Activated naive CD4-positive, alpha-beta T cell treated with anti-CD3 and anti-CD28 coated beads for 36 hours (primary cell): ENCODE measurements at regions of chr20 and their contacts with region 1.

Region 1: DNA sequence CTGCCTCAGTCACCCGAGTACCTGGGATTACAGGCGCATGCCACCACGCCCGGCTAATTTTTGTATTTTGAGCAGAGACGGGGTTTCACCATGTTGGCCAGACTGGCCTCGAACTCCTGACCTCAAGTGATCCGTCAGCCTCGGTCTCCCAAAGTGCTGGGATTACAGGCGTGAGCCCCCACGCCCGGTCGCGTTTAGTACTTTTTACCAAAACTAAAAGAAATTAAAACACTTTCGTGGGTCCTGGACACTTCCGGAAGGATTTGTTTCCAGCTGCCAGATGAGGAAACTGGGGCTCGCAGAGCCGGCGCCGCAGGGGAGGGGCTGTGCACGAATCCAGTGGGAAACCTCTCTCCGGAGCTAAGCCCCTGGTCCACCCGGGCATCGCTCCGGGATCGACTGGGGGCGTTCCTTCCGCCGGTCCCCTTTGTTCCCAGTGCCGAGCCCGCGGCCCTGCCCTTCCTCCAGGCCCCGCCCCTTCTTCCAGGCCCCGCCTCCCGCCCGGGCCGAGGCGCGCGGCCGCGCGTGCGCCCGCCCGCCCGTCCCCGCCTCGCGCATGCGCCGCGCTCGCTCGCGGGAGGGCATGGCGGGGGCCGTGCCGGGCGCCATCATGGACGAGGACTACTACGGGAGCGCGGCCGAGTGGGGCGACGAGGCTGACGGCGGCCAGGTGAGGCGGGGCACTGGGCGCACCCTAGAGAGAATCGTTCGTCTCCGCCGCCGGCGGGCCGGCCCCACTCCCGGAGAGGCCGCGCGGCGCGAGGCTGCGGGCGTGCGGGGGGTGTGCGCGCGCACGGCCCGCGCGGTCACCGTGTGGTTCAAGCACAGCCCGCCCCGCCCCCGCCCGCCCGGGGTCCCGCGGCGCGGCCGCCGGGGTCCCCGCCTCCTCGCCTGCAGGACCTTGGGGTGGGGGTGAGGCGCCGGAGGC is at the start of gene NELFCD:
- DNase-seq: peak; percentile 87
- H3K4me3 Mint-ChIP-seq: peak within 1 kb of the TSS; percentile 91
- H3K27ac Mint-ChIP-seq: peak within 1 kb of the TSS; percentile 79
- H3K4me1 Mint-ChIP-seq: peaks cover 33% of the 10 kb centered on the region
- H3K27me3 Mint-ChIP-seq: no peaks in the 10 kb centered on the region
- total RNA-seq, gene NELFCD: 102 to 103 TPM

Region 2: GRCh38 chr20:58888521-58889333 is 92.2 kb before region 1 on chr20:
- CTCF ChIA-PET with region 1: interaction called, 4 read pairs
- intact Hi-C with region 1: loop called (anchors 1 kb)
- DNase-seq: peak; percentile 89
- H3K4me3 Mint-ChIP-seq: peak overlapping the region; percentile 84
- H3K27ac Mint-ChIP-seq: no peak overlapping the region
- H3K4me1 Mint-ChIP-seq: peaks cover 27% of the 10 kb centered on the region
- H3K27me3 Mint-ChIP-seq: no peaks in the 10 kb centered on the region

Region 3: GRCh38 chr20:58907399-58908137 is 73.4 kb before region 1 on chr20:
- CTCF ChIA-PET with region 1: no interaction called
- intact Hi-C with region 1: loop called (anchors 5 kb)
- DNase-seq: peak; percentile 65
- H3K4me3 Mint-ChIP-seq: peak overlapping the region; percentile 66
- H3K27ac Mint-ChIP-seq: peak overlapping the region; percentile 88
- H3K4me1 Mint-ChIP-seq: peaks cover 45% of the 10 kb centered on the region
- H3K27me3 Mint-ChIP-seq: no peaks in the 10 kb centered on the region

Region 4: GRCh38 chr20:58950603-58951002 is 30.4 kb before region 1 on chr20:
- CTCF ChIA-PET with region 1: no interaction called
- intact Hi-C with region 1: no loop called
- DNase-seq: peak; percentile 8
- H3K4me3 Mint-ChIP-seq: no peak overlapping the region
- H3K27ac Mint-ChIP-seq: no peak overlapping the region
- H3K4me1 Mint-ChIP-seq: no peaks in the 10 kb centered on the region
- H3K27me3 Mint-ChIP-seq: no peaks in the 10 kb centered on the region

Region 5: DNA sequence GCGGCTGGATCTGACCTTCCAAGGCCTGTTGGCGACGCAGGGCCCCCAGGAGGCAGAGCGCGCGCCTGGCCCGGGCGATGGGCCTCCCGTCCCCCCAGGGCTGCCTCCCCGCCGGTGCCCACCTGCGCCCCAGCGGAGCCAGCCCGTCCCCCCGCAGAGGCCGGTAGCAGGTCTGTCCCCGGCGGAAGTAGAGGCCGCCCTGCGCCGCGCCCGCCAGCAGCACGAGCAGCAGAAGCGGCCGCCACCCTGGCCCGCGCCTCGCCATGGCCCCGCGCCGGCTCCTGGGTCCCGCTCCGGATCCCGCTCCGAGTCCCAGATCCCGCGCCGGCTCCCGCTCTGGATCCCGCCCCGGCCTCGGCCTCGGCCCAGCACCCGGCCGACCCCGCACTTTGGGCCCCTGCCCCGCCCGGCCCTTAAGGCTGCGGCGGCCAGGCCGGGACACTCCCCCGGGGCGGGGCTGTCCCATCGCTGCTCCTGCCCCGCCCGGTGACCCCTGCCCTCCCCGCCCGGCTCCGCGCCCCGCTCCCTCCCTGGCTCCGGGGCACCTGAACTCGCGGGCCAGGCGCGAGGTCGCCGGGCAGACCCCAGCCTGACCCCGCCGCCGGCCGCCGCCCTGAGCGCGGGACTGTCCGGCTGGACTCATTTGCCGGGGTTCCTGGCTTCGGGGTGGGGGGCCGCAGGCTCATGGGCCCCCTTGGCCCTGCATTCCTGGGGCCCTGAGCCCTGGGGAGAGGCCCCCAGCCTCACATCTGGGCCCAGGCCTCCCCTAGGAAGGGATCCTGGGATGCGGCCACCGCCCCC is 26.1 kb after region 1 on chr20 and contains the start of gene CTSZ:
- CTCF ChIA-PET with region 1: interaction called, 6 read pairs
- intact Hi-C with region 1: loop called (anchors 2 kb)
- DNase-seq: peak; percentile 43
- H3K4me3 Mint-ChIP-seq: peak within 1 kb of the TSS; percentile 73
- H3K27ac Mint-ChIP-seq: no peak within 1 kb of the TSS
- H3K4me1 Mint-ChIP-seq: peaks cover 31% of the 10 kb centered on the region
- H3K27me3 Mint-ChIP-seq: no peaks in the 10 kb centered on the region
- total RNA-seq, gene CTSZ: 17.3 to 17.9 TPM

Region 6: DNA sequence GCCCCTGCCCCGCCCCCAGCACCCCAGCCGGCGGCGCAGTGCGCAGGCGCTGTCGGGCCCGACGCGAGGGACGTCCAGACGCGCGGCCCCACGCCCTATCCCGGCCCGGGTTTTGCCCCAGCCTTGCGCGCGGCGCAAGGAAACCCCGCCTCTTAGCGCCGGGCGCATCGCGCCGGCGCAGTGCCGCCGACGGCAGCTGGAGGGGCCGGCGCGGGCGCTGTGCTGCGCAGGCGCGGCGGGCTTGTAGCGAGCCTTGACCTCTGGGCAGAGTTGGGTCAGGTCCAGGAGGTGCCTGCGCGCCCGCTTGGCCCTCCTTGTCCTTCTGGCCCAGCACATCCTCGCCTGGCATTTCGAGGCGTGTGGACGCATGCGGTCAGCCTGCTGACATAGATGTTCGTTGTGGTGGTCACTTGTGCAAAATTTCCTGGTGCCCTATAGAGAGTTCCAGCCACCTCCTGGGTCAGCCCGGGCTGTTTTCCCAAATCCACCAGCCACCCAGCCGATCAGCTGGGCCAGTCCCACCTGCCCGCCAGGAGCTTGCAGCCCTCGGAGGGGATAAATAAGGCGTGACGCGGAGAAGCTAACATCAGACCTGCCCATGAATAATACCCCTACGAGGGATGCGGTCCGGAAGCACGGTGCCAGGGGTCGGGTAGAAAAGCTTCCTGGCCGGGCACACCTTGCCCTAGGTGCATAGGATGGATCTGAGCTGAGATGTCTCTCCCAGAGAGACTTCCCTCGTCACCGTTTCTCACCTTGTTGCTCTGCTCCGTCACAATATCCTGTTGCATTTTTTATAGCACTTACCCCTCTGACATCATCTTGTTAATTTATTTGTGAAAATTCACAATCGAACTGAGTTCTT is 62.1 kb after region 1 on chr20:
- CTCF ChIA-PET with region 1: no interaction called
- intact Hi-C with region 1: loop called (anchors 1 kb)
- DNase-seq: peak; percentile 92
- H3K4me3 Mint-ChIP-seq: peak overlapping the region; percentile 93
- H3K27ac Mint-ChIP-seq: peak overlapping the region; percentile 84
- H3K4me1 Mint-ChIP-seq: peaks cover 40% of the 10 kb centered on the region
- H3K27me3 Mint-ChIP-seq: no peaks in the 10 kb centered on the region

Region 7: DNA sequence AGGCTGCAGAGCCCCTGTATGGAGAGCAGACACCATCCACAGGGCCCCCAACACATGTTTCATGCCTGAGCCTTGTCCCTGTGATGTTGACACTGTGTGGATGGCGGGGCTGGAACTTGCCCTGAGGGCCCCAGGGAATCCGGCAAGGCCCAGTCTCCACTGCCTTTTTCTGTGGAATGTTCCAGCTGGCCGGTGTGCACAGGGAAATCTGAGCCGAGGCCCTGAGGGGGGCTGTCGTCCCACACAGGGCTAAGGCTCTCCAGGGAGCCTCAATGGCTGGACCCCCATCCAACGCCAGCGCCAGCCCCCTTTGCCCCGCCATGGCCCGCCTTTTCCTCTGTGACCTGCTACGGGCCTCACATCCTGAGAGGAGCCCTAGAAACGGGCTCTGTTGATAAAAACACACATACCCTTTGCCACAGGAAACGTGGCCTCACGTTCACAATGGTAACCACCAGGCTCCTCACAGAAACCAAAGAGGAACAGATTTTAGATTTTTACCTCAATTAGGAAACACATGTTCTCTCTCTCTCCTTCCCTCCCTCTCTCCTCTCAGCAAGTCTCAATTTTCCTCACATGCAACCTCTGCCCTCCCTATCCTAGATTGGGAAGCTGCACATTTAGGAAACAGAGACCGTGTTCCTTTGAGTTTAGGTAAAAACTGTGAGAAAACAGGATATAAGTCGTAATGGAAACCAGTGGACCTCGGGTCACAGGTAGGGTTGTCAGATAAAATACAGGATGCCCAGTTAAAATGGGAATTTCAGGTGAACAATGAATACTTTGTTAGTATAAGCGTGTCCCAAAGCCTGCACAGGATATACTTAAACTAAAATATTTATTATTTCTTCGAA is 168.9 kb after region 1 on chr20:
- CTCF ChIA-PET with region 1: no interaction called
- intact Hi-C with region 1: loop called (anchors 5 kb)
- DNase-seq: peak; percentile 84
- H3K4me3 Mint-ChIP-seq: peak overlapping the region; percentile 30
- H3K27ac Mint-ChIP-seq: peak overlapping the region; percentile 82
- H3K4me1 Mint-ChIP-seq: peaks cover 88% of the 10 kb centered on the region
- H3K27me3 Mint-ChIP-seq: no peaks in the 10 kb centered on the region

Region 8: GRCh38 chr20:59412875-59413284 is 431.9 kb after region 1 on chr20:
- CTCF ChIA-PET with region 1: no interaction called
- intact Hi-C with region 1: no loop called
- DNase-seq: no peak
- H3K4me3 Mint-ChIP-seq: no peak overlapping the region
- H3K27ac Mint-ChIP-seq: no peak overlapping the region
- H3K4me1 Mint-ChIP-seq: no peaks in the 10 kb centered on the region
- H3K27me3 Mint-ChIP-seq: no peaks in the 10 kb centered on the region